IMR-90 (cell line): ENCODE measurements at regions of chr10 and their contacts with region 1.

Region 1: DNA sequence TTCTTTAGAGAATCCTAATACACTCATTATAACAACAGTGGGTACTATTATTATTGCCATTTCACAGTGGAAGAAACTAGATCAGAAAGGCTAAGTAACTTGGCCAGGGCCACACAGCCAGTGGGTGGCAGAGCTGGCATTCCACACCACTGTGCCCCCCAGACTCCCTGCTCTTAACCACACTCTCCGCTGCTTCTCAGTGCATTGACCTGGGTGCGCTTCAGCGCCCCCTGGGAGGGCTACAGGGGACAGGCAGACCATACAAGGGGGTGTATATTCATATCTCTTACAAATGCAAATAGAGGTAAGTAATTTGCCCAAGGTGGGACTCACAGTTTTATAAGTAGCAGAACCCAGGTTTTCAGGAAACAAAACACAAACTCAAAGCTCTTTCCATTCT is 77.0 kb upstream of the NMT2 start:
- DNase-seq: no peak
- ATAC-seq: no peak; the same call in 1 of the 2 replicates
- H3K4me3 ChIP-seq: no peak overlapping the region
- H3K27ac ChIP-seq: no peak overlapping the region
- H3K4me1 ChIP-seq: peaks cover 2% of the 10 kb centered on the region; the same call in 1 of the 2 replicates
- H3K27me3 ChIP-seq: no peaks in the 10 kb centered on the region
- CTCF ChIP-seq: 0 out of 2 replicates have a peak, but pooled peaks have one; percentile 25
- POLR2A ChIP-seq: no peak
- RAD21 ChIP-seq: no peak

Region 2: DNA sequence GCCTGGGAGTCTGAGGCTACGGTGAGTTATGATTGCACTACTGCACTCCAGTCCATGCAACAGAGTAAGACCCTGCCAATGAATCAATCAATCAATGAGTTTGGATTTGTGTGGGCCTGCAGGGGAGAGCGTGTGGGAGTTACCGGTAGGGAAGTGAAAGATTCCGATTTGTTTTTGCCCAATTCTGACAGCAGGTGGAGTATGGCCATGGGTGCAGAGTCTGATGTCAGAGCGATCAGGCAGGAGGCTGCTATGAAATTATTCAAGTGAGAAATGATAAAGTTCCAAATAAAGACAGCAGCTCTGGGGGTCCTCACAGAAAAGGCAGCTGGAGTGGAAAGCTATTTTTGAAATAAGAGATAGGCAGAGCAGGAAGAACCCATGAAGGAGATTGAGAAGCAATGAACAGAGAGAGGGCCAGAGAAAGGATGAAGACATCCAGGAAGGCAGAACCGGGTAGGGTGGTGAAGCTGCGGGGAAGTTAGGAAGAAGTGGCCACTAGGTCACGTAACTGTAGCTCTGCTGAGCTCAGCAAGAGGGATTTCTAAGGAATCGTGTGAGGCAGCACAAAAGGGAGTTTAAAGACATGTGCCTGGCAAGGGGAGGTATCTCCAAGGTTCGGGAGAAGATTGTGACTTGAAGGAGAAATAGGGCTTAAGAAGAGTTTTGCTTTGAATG is 16.6 kb after region 1 on chr10:
- CTCF ChIA-PET with region 1: interaction called, 10 read pairs
- POLR2A ChIA-PET with region 1: no interaction called
- dilution Hi-C with region 1: no loop called
- in situ Hi-C with region 1: no loop called
- intact Hi-C with region 1: no loop called
- DNase-seq: peak; percentile 20
- ATAC-seq: no peak; the same call in 1 of the 2 replicates
- H3K4me3 ChIP-seq: no peak overlapping the region
- H3K27ac ChIP-seq: no peak overlapping the region
- H3K4me1 ChIP-seq: no peaks in the 10 kb centered on the region
- H3K27me3 ChIP-seq: no peaks in the 10 kb centered on the region
- CTCF ChIP-seq: no peak
- POLR2A ChIP-seq: no peak
- RAD21 ChIP-seq: peak; percentile 17; the same call in 1 of the 2 replicates

Region 3: DNA sequence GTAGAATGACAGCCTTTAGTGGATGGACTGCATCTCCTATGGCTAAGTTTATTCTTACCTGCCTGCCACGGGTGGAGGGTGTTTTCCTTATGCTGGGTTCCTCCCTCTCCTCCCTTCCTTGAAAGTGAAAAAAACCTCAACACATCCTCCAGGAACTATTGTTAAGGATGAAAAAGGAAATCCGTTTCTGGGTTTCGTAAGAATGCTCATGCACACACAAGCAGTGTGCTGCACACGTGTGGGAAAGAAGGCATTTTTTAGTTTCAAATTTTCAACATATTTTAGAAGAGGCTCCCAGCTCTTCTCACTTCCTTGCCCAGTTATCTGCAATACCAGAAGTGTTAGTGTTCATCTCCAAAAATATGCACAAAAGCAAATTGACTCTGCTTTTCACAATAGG is 34.9 kb after region 1 on chr10:
- CTCF ChIA-PET with region 1: no interaction called
- POLR2A ChIA-PET with region 1: no interaction called
- dilution Hi-C with region 1: no loop called
- in situ Hi-C with region 1: no loop called
- intact Hi-C with region 1: no loop called
- DNase-seq: no peak
- ATAC-seq: no peak
- H3K4me3 ChIP-seq: no peak overlapping the region
- H3K27ac ChIP-seq: no peak overlapping the region
- H3K4me1 ChIP-seq: no peaks in the 10 kb centered on the region
- H3K27me3 ChIP-seq: no peaks in the 10 kb centered on the region
- CTCF ChIP-seq: no peak
- POLR2A ChIP-seq: no peak
- RAD21 ChIP-seq: no peak